Caco-2 (cell line): ENCODE measurements at regions of chr7 and their contacts with region 1.

Region 1: GRCh38 chr7:115924411-115924810 is 106.2 kb downstream of the TFEC start:
- DNase-seq: no peak
- H3K4me3 ChIP-seq: no peak overlapping the region
- H3K4me3 Mint-ChIP-seq: no peak overlapping the region
- H3K27ac Mint-ChIP-seq: peak overlapping the region; percentile 65
- H3K4me1 ChIP-seq: peaks cover 11% of the 10 kb centered on the region
- H3K4me1 Mint-ChIP-seq: peaks cover 7% of the 10 kb centered on the region
- H3K27me3 ChIP-seq: no peaks in the 10 kb centered on the region
- H3K27me3 Mint-ChIP-seq: no peaks in the 10 kb centered on the region
- CTCF ChIP-seq: no peak

Region 2: GRCh38 chr7:115240242-115240641 is 684.2 kb before region 1 on chr7:
- CTCF ChIA-PET with region 1: no interaction called
- POLR2A ChIA-PET with region 1: no interaction called
- intact Hi-C with region 1: no loop called
- DNase-seq: no peak
- H3K4me3 ChIP-seq: no peak overlapping the region
- H3K4me3 Mint-ChIP-seq: no peak overlapping the region
- H3K27ac Mint-ChIP-seq: no peak overlapping the region
- H3K4me1 ChIP-seq: no peaks in the 10 kb centered on the region
- H3K4me1 Mint-ChIP-seq: no peaks in the 10 kb centered on the region
- H3K27me3 ChIP-seq: no peaks in the 10 kb centered on the region
- H3K27me3 Mint-ChIP-seq: no peaks in the 10 kb centered on the region
- CTCF ChIP-seq: no peak

Region 3: DNA sequence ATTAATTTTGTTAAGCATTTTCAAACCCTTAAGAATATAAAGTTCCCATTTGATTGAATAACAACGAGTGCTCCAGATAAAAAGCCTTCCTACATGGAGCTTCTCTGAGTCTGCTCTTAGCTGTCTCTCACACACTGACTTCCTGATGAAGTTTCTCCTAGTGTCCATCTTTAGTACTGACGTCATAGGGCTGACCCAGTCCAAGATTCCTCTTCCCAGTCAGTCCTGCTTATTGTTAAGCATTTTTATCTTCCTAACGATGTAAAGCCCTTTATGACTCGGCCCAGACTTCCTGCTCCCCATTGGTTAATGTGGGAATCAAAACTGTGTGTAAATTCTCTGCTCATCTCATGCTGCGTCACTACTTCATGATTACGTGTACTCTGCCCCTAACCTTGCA is 292.6 kb before region 1 on chr7:
- CTCF ChIA-PET with region 1: no interaction called
- POLR2A ChIA-PET with region 1: no interaction called
- intact Hi-C with region 1: no loop called
- DNase-seq: no peak
- H3K4me3 ChIP-seq: no peak overlapping the region
- H3K4me3 Mint-ChIP-seq: no peak overlapping the region
- H3K27ac Mint-ChIP-seq: no peak overlapping the region
- H3K4me1 ChIP-seq: peaks cover 26% of the 10 kb centered on the region
- H3K4me1 Mint-ChIP-seq: peaks cover 27% of the 10 kb centered on the region
- H3K27me3 ChIP-seq: no peaks in the 10 kb centered on the region
- H3K27me3 Mint-ChIP-seq: no peaks in the 10 kb centered on the region
- CTCF ChIP-seq: peak; percentile 5 to 33

Region 4: DNA sequence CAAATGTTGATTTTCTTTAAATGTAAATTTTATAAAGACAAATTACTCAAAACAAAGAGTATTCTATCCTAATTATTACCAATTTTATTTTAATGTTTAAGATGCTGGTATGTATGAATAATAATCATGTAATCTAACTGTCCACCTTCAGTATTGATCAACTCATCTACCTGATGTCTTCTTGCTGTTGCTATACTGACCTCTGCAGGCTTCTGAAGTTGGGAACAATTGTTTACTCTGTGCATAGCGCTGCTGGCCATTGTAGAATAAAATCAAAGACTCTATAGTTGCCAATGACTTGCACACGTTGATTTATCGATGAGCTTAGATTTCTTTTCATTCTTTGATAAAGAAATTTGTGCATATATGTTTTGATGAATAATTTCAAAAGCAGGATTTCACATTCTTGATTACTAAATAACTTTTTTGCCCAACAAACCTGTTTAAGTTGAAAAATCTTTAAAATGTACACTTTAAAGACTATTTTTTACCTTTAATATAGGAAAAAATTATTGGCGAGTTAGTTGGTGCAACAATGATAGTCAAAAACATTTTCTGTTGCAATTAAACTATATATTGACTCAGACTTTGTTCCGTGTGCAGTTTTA is 176.2 kb before region 1 on chr7:
- CTCF ChIA-PET with region 1: no interaction called
- POLR2A ChIA-PET with region 1: no interaction called
- intact Hi-C with region 1: no loop called
- DNase-seq: peak in 1 of 2 experiments; percentile 40
- H3K4me3 ChIP-seq: no peak overlapping the region
- H3K4me3 Mint-ChIP-seq: no peak overlapping the region
- H3K27ac Mint-ChIP-seq: no peak overlapping the region
- H3K4me1 ChIP-seq: no peaks in the 10 kb centered on the region
- H3K4me1 Mint-ChIP-seq: no peaks in the 10 kb centered on the region
- H3K27me3 ChIP-seq: no peaks in the 10 kb centered on the region
- H3K27me3 Mint-ChIP-seq: no peaks in the 10 kb centered on the region
- CTCF ChIP-seq: peak; percentile 29 to 64

Region 5: DNA sequence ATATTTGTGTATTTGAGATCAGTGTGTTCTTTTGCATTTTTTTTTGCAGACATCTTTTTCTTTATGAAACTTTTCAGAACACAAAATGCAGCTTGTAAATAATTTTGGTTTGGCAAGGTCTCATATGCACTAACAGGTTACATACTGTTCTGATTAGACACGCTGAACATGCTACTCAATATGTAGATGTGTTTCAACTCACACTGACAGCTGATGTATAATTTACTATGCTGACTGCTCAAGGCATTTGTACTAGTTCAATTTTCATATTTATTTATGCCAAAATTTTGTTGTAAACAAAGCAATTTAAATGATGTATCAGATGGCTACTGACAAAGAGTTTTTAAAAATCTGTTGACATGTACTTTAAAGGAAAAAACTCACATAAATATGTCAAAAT is 17.7 kb before region 1 on chr7:
- CTCF ChIA-PET with region 1: no interaction called
- POLR2A ChIA-PET with region 1: no interaction called
- intact Hi-C with region 1: no loop called
- DNase-seq: no peak
- H3K4me3 ChIP-seq: no peak overlapping the region
- H3K4me3 Mint-ChIP-seq: no peak overlapping the region
- H3K27ac Mint-ChIP-seq: no peak overlapping the region
- H3K4me1 ChIP-seq: no peaks in the 10 kb centered on the region
- H3K4me1 Mint-ChIP-seq: peaks cover 5% of the 10 kb centered on the region
- H3K27me3 ChIP-seq: no peaks in the 10 kb centered on the region
- H3K27me3 Mint-ChIP-seq: no peaks in the 10 kb centered on the region
- CTCF ChIP-seq: no peak

Region 6: DNA sequence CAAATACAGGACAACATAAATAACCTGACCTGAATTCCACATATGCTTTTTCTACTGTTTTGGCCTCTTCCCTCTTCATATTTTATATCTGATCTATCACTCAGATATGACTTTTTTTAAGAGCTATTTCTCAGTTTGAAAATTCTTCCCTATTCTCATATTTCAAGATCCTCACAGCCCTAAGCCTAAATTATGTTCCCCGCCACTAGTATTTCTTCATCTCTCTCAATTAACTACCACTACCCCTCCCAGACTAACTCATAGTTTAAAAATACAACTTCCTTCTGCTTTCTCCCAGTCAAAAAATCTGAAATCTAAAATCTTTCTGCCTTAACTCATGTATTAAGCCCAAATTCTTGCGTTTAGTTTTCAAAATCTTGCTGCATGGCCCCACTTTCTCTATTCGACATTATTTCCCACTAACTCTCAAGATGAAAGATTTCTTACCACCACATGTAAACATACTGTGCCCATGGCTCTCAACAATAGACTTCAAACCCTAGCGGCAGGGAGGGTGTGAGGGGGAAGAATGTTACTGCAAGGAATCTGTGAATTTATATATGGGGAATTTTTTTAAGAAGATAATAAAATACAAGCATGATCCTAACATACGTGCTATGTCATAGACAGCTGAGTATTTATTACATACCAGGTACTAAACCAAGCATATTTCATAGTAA is 41.5 kb after region 1 on chr7:
- CTCF ChIA-PET with region 1: no interaction called
- POLR2A ChIA-PET with region 1: no interaction called
- intact Hi-C with region 1: loop called (anchors 2 kb)
- DNase-seq: peak in 1 of 2 experiments; percentile 16
- H3K4me3 ChIP-seq: peak overlapping the region; percentile 21
- H3K4me3 Mint-ChIP-seq: peak overlapping the region; percentile 66
- H3K27ac Mint-ChIP-seq: peak overlapping the region; percentile 68
- H3K4me1 ChIP-seq: peaks cover 66% of the 10 kb centered on the region
- H3K4me1 Mint-ChIP-seq: peaks cover 37% of the 10 kb centered on the region
- H3K27me3 ChIP-seq: no peaks in the 10 kb centered on the region
- H3K27me3 Mint-ChIP-seq: no peaks in the 10 kb centered on the region
- CTCF ChIP-seq: no peak